Endothelial cell of umbilical vein (primary cell): ENCODE measurements at regions of chr11 and their contacts with region 1.

Region 1: GRCh38 chr11:64341851-64342791 is 2.1 kb downstream of the CCDC88B start:
- DNase-seq: peak; percentile 87
- H3K4me3 ChIP-seq: peak overlapping the region in 1 of 3 experiments; percentile 16
- H3K27ac ChIP-seq: no peak overlapping the region
- H3K4me1 ChIP-seq: no peaks in the 10 kb centered on the region
- H3K27me3 ChIP-seq: no peaks in the 10 kb centered on the region
- CTCF ChIP-seq: peak; percentile 34 to 62
- POLR2A ChIP-seq: no peak

Region 2: GRCh38 chr11:64317957-64318693 is 24.0 kb before region 1 on chr11 and contains the start of gene PRDX5:
- CTCF ChIA-PET with region 1: interaction called, 24 read pairs
- POLR2A ChIA-PET with region 1: interaction called, 4 read pairs
- dilution Hi-C with region 1: no loop called
- intact Hi-C with region 1: no loop called
- DNase-seq: peak; percentile 96
- H3K4me3 ChIP-seq: peak within 1 kb of the TSS; percentile 57 to 76 (median 75)
- H3K27ac ChIP-seq: peak within 1 kb of the TSS; percentile 87
- H3K4me1 ChIP-seq: peaks cover 10% of the 10 kb centered on the region
- H3K27me3 ChIP-seq: no peaks in the 10 kb centered on the region
- CTCF ChIP-seq: peak in 1 of 2 donors; percentile 32
- POLR2A ChIP-seq: peak; percentile 64
- total RNA-seq, gene PRDX5: 199 and 202 TPM in 2 replicates

Region 3: GRCh38 chr11:64324692-64325469 is 17.2 kb before region 1 on chr11:
- CTCF ChIA-PET with region 1: interaction called, 14 read pairs
- POLR2A ChIA-PET with region 1: no interaction called
- dilution Hi-C with region 1: no loop called
- intact Hi-C with region 1: no loop called
- DNase-seq: no peak
- H3K4me3 ChIP-seq: no peak overlapping the region
- H3K27ac ChIP-seq: no peak overlapping the region
- H3K4me1 ChIP-seq: no peaks in the 10 kb centered on the region
- H3K27me3 ChIP-seq: no peaks in the 10 kb centered on the region
- CTCF ChIP-seq: no peak
- POLR2A ChIP-seq: no peak

Region 4: GRCh38 chr11:64331557-64332371 is 10.4 kb before region 1 on chr11:
- CTCF ChIA-PET with region 1: interaction called, 27 read pairs
- POLR2A ChIA-PET with region 1: no interaction called
- dilution Hi-C with region 1: no loop called
- intact Hi-C with region 1: no loop called
- DNase-seq: peak; percentile 74
- H3K4me3 ChIP-seq: no peak overlapping the region
- H3K27ac ChIP-seq: no peak overlapping the region
- H3K4me1 ChIP-seq: peaks cover 3% of the 10 kb centered on the region
- H3K27me3 ChIP-seq: no peaks in the 10 kb centered on the region
- CTCF ChIP-seq: peak; percentile 64 to 82
- POLR2A ChIP-seq: no peak

Region 5: DNA sequence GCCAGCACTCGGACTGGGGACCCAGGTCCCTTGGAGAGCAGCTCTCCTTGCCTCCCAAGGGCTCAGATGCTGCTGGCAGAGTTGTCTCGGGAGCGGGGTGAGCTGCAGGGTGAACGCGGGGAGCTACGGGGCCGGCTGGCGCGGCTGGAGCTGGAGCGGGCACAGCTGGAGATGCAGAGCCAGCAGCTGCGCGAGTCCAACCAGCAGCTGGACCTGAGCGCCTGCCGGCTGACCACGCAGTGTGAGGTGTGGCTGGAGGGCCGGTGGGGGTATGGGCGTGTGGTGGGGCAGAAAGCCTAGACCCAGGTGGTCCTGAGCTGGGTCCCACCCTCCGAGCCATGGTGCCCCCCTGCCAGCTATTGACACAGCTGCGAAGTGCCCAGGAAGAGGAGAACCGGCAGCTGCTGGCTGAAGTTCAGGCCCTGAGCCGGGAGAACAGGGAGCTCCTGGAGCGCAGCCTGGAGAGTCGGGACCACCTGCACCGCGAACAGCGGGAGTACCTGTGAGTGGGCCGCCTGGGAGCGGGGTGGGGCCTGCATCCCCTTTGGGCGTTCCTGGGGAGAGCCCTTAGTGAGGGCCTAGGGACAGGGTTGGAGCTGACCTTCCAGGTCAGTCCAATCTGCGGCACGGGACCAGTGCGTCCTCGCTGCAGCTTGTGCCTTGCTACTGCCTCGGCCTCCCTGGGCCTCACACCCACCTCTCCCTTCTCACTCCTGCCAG is 11.0 kb after region 1 on chr11:
- CTCF ChIA-PET with region 1: interaction called, 107 read pairs
- POLR2A ChIA-PET with region 1: interaction called, 3 read pairs
- dilution Hi-C with region 1: no loop called
- intact Hi-C with region 1: no loop called
- DNase-seq: no peak
- H3K4me3 ChIP-seq: no peak overlapping the region
- H3K27ac ChIP-seq: no peak overlapping the region
- H3K4me1 ChIP-seq: peaks cover 12% of the 10 kb centered on the region
- H3K27me3 ChIP-seq: no peaks in the 10 kb centered on the region
- CTCF ChIP-seq: no peak
- POLR2A ChIP-seq: no peak